CD8-positive, alpha-beta memory T cell (primary cell): ENCODE measurements at regions of chr15 and their contacts with region 1.

Region 1: GRCh38 chr15:72231066-72231846 is at the start of gene PKM:
- DNase-seq: peak; percentile 81 to 91 (median 87)
- H3K4me3 ChIP-seq: peak within 1 kb of the TSS; percentile 63
- H3K4me3 Mint-ChIP-seq: peak within 1 kb of the TSS; percentile 95 to 99 (median 98)
- H3K27ac ChIP-seq: peak within 1 kb of the TSS; percentile 86
- H3K27ac Mint-ChIP-seq: peak within 1 kb of the TSS; percentile 90 to 100 (median 96)
- H3K4me1 ChIP-seq: peaks cover 43% of the 10 kb centered on the region
- H3K4me1 Mint-ChIP-seq: peaks cover 45 to 52% (median 48%) of the 10 kb centered on the region in 3 donors
- H3K27me3 ChIP-seq: no peaks in the 10 kb centered on the region
- H3K27me3 Mint-ChIP-seq: peaks cover 0 to 1% of the 10 kb centered on the region in 2 donors
- total RNA-seq, gene PKM: 2,146 to 2,187 TPM

Region 2: DNA sequence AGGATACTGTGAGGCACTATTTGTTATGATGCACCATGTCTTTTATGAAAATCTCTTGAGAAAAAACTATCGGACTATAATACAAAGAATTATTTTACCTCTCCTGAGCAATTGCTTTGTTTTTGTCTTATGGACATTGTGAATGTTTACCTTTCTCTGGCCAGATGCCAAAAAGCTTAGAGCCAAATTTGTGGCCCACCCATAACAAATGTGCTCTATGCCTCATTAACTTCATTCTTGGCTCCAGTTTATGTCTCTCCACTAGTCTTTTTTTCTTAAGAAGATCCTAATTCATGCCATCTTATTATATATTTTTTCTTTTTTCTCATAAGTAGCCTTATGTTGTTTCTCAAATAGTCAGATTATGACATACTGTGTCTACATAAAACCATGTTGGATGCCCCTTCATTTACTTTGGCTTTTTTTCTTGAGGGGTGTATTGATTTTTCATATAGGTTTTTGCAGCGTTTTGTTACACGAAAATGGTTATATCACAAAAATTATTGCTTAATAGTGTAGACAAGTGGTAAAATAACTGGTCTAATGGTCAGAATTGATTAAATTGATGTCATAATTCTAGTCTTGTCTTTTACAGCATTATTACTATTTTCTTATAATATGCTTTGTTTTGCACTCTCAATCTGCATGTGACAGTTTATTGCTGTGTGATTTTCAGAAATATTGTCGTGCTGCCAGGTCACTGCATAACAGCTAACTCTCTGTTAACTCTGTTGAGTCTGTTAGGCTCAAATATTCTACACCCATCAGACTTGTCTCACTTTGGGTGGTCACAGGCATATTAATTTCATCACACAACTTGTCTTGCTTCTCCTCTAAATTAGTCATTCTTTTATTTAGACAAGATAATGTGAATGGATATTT is 94.8 kb before region 1 on chr15:
- CTCF ChIA-PET with region 1: no interaction called
- POLR2A ChIA-PET with region 1: no interaction called
- DNase-seq: no peak
- H3K4me3 ChIP-seq: no peak overlapping the region
- H3K4me3 Mint-ChIP-seq: no peak overlapping the region
- H3K27ac ChIP-seq: no peak overlapping the region
- H3K27ac Mint-ChIP-seq: no peak overlapping the region
- H3K4me1 ChIP-seq: no peaks in the 10 kb centered on the region
- H3K4me1 Mint-ChIP-seq: peaks cover 0 to 1% (median 0%) of the 10 kb centered on the region in 3 donors
- H3K27me3 ChIP-seq: no peaks in the 10 kb centered on the region
- H3K27me3 Mint-ChIP-seq: no peaks in the 10 kb centered on the region

Region 3: DNA sequence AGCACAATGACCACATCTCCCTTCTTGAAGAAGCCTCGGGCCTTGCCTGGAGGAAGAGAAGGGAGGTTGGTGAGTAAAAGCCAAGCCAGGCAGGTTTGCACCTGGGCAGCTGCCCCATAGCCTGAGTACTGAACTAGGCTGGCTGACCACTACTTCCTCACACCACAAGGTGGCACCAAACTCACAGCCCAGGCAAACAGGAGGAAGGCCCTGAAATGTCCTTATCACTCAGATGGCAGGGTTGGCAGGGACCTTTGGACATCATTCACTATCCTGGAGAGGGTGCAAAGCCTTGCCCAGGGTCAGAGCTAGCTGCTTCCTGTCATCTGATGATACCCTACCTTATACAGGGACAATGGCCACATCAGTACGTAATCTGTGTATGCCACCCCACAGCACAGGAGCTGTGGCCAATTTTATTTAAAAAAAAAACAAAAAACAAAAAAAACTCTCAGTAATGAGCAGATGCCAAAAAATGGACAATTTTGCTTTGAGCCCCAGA is 31.5 kb before region 1 on chr15:
- CTCF ChIA-PET with region 1: interaction called, 51 read pairs
- POLR2A ChIA-PET with region 1: interaction called, 4 read pairs
- DNase-seq: peak; percentile 49 to 83 (median 59)
- H3K4me3 ChIP-seq: no peak overlapping the region
- H3K4me3 Mint-ChIP-seq: no peak overlapping the region
- H3K27ac ChIP-seq: no peak overlapping the region
- H3K27ac Mint-ChIP-seq: peak overlapping the region in 2 of 8 donors; percentile 23 to 50
- H3K4me1 ChIP-seq: no peaks in the 10 kb centered on the region
- H3K4me1 Mint-ChIP-seq: peaks cover 0 to 17% (median 5%) of the 10 kb centered on the region in 3 donors
- H3K27me3 ChIP-seq: peaks cover 8% of the 10 kb centered on the region
- H3K27me3 Mint-ChIP-seq: peaks cover 15 to 18% of the 10 kb centered on the region in 2 donors

Region 4: GRCh38 chr15:72217216-72217615 is 14.0 kb before region 1 on chr15:
- CTCF ChIA-PET with region 1: interaction called, 12 read pairs
- POLR2A ChIA-PET with region 1: interaction called, 5 read pairs
- DNase-seq: no peak
- H3K4me3 ChIP-seq: no peak overlapping the region
- H3K4me3 Mint-ChIP-seq: no peak overlapping the region
- H3K27ac ChIP-seq: no peak overlapping the region
- H3K27ac Mint-ChIP-seq: peak overlapping the region in 5 of 8 donors; percentile 23 to 56 (median 42)
- H3K4me1 ChIP-seq: peaks cover 7% of the 10 kb centered on the region
- H3K4me1 Mint-ChIP-seq: peaks cover 25 to 33% (median 32%) of the 10 kb centered on the region in 3 donors
- H3K27me3 ChIP-seq: no peaks in the 10 kb centered on the region
- H3K27me3 Mint-ChIP-seq: no peaks in the 10 kb centered on the region

Region 5: GRCh38 chr15:72272213-72273002 is 41.2 kb after region 1 on chr15 and contains the start of gene PARP6:
- CTCF ChIA-PET with region 1: interaction called, 19 read pairs
- POLR2A ChIA-PET with region 1: interaction called, 9 read pairs
- DNase-seq: peak; percentile 97 to 99 (median 99)
- H3K4me3 ChIP-seq: peak within 1 kb of the TSS; percentile 75
- H3K4me3 Mint-ChIP-seq: peak within 1 kb of the TSS; percentile 87 to 96 (median 91)
- H3K27ac ChIP-seq: peak within 1 kb of the TSS; percentile 84
- H3K27ac Mint-ChIP-seq: peak within 1 kb of the TSS; percentile 86 to 98 (median 95)
- H3K4me1 ChIP-seq: peaks cover 33% of the 10 kb centered on the region
- H3K4me1 Mint-ChIP-seq: peaks cover 38 to 50% (median 48%) of the 10 kb centered on the region in 3 donors
- H3K27me3 ChIP-seq: no peaks in the 10 kb centered on the region
- H3K27me3 Mint-ChIP-seq: no peaks in the 10 kb centered on the region
- total RNA-seq, gene PARP6: 59.4 to 63.9 TPM

Region 6: DNA sequence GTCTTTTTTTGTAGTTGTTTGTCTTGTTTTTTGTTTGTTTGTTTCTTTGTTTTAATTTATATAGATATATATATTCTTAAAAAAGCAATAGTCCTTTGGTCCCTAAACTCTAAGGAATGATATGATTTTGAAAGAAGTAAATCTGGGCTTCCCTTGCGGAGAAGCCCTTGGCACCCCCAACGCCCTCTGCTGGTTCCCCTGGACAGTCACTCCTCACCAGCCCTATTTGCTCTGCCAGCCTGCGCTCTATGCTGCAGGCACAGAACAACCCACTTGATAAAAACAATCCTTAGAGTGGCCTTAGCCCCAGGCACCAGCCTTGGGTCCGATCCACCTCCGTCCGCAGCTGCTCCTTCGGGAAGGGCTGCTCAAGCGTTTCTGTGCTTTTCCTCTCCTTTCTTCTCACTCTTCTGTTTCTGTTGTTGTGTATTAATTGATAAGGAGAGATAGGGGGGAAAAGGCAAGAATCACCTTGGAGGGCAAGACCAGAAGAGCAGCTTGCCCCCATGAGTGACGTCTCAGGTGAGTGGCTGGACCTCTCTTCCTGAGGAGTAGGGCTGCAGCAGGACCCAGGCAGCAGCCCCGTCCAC is 54.8 kb after region 1 on chr15:
- CTCF ChIA-PET with region 1: interaction called, 16 read pairs
- POLR2A ChIA-PET with region 1: no interaction called
- DNase-seq: peak; percentile 15 to 57 (median 29)
- H3K4me3 ChIP-seq: no peak overlapping the region
- H3K4me3 Mint-ChIP-seq: no peak overlapping the region
- H3K27ac ChIP-seq: no peak overlapping the region
- H3K27ac Mint-ChIP-seq: peak overlapping the region in 1 of 8 donors; percentile 41
- H3K4me1 ChIP-seq: no peaks in the 10 kb centered on the region
- H3K4me1 Mint-ChIP-seq: no peaks in the 10 kb centered on the region
- H3K27me3 ChIP-seq: no peaks in the 10 kb centered on the region
- H3K27me3 Mint-ChIP-seq: no peaks in the 10 kb centered on the region

Region 7: DNA sequence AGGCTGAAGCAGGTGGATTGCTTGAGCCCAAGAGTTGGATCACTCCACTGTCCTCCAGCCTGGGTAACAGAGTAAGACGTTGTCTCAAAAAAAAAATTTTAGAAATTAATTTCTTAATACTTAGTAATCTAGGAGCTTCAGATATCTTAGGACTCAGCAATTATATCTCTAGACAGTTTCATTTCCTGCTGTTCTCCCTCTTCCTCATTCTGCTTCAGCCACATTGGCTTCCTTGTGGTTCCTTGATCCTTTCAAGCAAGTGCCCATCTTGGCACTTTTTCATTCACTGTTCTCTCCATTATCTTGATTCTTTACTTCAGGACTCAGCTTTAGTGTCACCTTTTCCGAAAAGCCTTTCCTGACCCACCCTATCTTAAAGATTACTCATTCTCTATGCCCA is 189.3 kb after region 1 on chr15:
- CTCF ChIA-PET with region 1: no interaction called
- POLR2A ChIA-PET with region 1: no interaction called
- DNase-seq: no peak
- H3K4me3 ChIP-seq: no peak overlapping the region
- H3K4me3 Mint-ChIP-seq: no peak overlapping the region
- H3K27ac ChIP-seq: no peak overlapping the region
- H3K27ac Mint-ChIP-seq: no peak overlapping the region
- H3K4me1 ChIP-seq: no peaks in the 10 kb centered on the region
- H3K4me1 Mint-ChIP-seq: no peaks in the 10 kb centered on the region
- H3K27me3 ChIP-seq: no peaks in the 10 kb centered on the region
- H3K27me3 Mint-ChIP-seq: peaks cover 0 to 2% of the 10 kb centered on the region in 2 donors